ENCODE measurements at regions of chr2 and their contacts with region 1.

Region 1: DNA sequence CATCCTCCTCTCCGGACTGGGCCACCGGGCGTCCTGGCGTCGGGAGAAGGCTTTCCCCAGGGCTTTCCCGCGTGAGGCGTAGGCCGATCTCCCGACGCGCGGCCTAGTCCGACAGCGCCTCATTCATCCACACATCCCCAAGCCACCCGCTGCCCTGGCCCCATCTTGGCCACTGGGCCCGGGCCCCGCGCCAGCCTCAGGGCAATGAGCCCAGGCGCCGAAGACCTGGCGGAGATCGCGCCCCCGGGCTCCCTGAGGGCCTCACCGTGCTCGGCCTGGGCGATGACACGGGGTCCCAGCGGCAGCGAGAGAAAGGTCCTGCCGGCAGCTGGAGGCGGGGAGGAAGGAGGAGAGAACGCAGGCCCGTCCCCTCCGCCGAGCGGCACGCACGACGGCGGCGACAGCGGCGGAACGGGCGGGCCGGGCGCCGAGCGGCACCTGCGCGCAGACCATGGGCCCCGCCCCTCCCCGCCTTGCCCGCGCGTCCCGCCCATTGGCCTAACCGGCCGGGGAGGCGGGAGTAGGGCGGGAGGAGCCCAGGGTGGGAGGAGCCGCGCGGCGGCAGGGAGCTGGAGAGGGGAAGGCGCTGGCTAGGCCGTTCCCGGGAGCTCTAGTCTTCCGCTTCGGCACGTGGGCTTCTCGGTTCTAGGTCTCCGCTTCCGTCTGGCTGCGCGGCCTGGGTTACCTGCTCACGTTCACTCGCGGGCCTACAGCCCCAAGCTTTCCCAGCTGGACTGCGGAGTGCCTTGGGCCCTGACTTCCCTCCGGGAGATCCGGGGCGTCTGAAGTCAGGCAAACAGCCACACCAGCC is at the start of gene OLA1:
- DNase-seq: peak; percentile 97
- H3K4me3 Mint-ChIP-seq: peak within 1 kb of the TSS; percentile 86
- H3K27ac Mint-ChIP-seq: peak within 1 kb of the TSS; percentile 77
- H3K4me1 Mint-ChIP-seq: peaks cover 24% of the 10 kb centered on the region
- H3K27me3 Mint-ChIP-seq: no peaks in the 10 kb centered on the region
- total RNA-seq, gene OLA1: 111 to 117 TPM

Region 2: DNA sequence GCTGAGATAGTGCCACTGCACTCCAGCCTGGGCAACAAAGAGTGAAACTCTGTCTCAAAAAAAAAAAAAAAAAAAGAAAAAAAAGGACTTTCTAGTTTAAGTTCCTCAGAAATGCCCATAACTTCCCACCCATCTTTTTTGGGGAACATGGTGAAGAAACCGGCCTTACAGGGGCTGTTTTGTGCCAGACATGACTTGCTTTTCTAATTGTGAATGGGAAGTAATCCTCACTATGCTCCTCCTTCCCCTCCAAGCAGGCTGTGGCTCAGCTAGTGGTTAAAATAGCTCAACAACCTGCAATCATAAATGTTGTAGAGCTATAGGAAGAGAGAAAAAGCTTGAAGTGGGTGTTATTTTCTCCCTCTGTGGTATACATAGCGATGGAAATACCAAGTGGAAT is 34.0 kb after region 1 on chr2:
- CTCF ChIA-PET with region 1: no interaction called
- POLR2A ChIA-PET with region 1: no interaction called
- intact Hi-C with region 1: no loop called
- DNase-seq: no peak
- H3K4me3 Mint-ChIP-seq: no peak overlapping the region
- H3K27ac Mint-ChIP-seq: no peak overlapping the region
- H3K4me1 Mint-ChIP-seq: no peaks in the 10 kb centered on the region
- H3K27me3 Mint-ChIP-seq: peaks cover 27% of the 10 kb centered on the region

Region 3: GRCh38 chr2:174395284-174395968 is 147.0 kb after region 1 on chr2 and contains the start of gene SCRN3:
- CTCF ChIA-PET with region 1: no interaction called
- POLR2A ChIA-PET with region 1: no interaction called
- intact Hi-C with region 1: loop called (anchors 1 kb)
- DNase-seq: peak; percentile 88
- H3K4me3 Mint-ChIP-seq: peak within 1 kb of the TSS; percentile 98
- H3K27ac Mint-ChIP-seq: peak within 1 kb of the TSS; percentile 96
- H3K4me1 Mint-ChIP-seq: peaks cover 28% of the 10 kb centered on the region
- H3K27me3 Mint-ChIP-seq: no peaks in the 10 kb centered on the region
- total RNA-seq, gene SCRN3: 12.4 to 12.9 TPM